ENCODE measurements at regions of chr14 and their contacts with region 1.

Region 1: DNA sequence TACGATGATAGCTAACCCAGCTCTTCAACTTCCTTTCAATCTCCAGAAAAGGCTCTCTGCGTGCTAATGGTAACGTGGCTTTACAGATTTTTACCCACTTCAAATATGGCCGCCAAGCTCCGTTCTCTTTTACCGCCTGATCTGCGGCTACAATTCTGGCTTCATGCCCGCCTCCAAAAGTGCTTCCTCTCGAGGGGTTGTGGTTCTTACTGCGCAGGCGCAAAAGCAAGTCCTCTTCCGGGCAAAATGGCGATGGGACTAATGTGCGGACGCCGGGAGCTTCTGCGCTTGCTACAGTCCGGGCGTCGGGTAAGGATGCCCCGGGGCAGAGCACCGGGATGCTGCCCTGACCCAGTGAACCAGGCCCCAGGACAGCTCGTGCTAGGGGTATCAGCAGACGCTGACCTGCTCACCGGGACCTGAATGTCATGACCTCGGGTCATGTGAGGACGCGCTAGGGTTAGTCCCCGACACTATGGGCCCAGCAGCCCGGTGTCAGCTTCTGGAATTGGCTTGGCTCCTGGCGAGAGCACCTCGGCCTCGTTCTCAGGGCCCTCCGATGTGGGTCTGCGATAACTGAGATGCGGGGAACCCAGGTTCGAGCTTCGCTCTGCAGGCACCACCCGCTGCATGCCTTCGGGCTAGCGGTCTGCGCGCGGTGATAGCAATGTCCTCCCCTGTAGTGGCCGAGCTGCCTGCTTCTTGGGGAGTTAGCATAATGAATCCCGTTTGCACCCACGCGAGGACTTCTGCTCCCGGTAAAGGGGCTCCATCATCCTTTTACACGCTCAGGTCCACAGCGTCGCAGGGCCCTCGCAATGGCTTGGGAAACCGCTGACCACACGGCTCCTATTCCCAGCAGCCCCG is at the start of gene OXA1L:
- DNase-seq: peak; percentile 99
- H3K4me3 Mint-ChIP-seq: peak within 1 kb of the TSS; percentile 83
- H3K27ac Mint-ChIP-seq: peak within 1 kb of the TSS; percentile 95
- H3K4me1 Mint-ChIP-seq: peaks cover 31% of the 10 kb centered on the region
- H3K27me3 Mint-ChIP-seq: no peaks in the 10 kb centered on the region
- total RNA-seq, gene OXA1L: 149 to 152 TPM

Region 2: GRCh38 chr14:22589096-22589839 is 177.4 kb before region 1 on chr14 and contains the start of gene DAD1:
- CTCF ChIA-PET with region 1: interaction called, 5 read pairs
- intact Hi-C with region 1: loop called (anchors 1 kb)
- DNase-seq: peak; percentile 100
- H3K4me3 Mint-ChIP-seq: peak within 1 kb of the TSS; percentile 98
- H3K27ac Mint-ChIP-seq: peak within 1 kb of the TSS; percentile 99
- H3K4me1 Mint-ChIP-seq: peaks cover 68% of the 10 kb centered on the region
- H3K27me3 Mint-ChIP-seq: no peaks in the 10 kb centered on the region
- total RNA-seq, gene DAD1: 219 to 226 TPM

Region 3: GRCh38 chr14:22713631-22713950 is 53.1 kb before region 1 on chr14:
- CTCF ChIA-PET with region 1: no interaction called
- intact Hi-C with region 1: loop called (anchors 2 kb)
- DNase-seq: no peak
- H3K4me3 Mint-ChIP-seq: peak overlapping the region; percentile 84
- H3K27ac Mint-ChIP-seq: peak overlapping the region; percentile 63
- H3K4me1 Mint-ChIP-seq: peaks cover 13% of the 10 kb centered on the region
- H3K27me3 Mint-ChIP-seq: peaks cover 11% of the 10 kb centered on the region

Region 4: GRCh38 chr14:22791301-22791700 is 24.6 kb after region 1 on chr14:
- CTCF ChIA-PET with region 1: no interaction called
- intact Hi-C with region 1: loop called (anchors 1 kb)
- DNase-seq: no peak
- H3K4me3 Mint-ChIP-seq: no peak overlapping the region
- H3K27ac Mint-ChIP-seq: peak overlapping the region; percentile 10
- H3K4me1 Mint-ChIP-seq: peaks cover 16% of the 10 kb centered on the region
- H3K27me3 Mint-ChIP-seq: no peaks in the 10 kb centered on the region

Region 5: GRCh38 chr14:22872033-22872832 is 105.5 kb after region 1 on chr14:
- CTCF ChIA-PET with region 1: no interaction called
- intact Hi-C with region 1: loop called (anchors 1 kb)
- DNase-seq: peak; percentile 87
- H3K4me3 Mint-ChIP-seq: peak overlapping the region; percentile 91
- H3K27ac Mint-ChIP-seq: peak overlapping the region; percentile 100
- H3K4me1 Mint-ChIP-seq: peaks cover 29% of the 10 kb centered on the region
- H3K27me3 Mint-ChIP-seq: no peaks in the 10 kb centered on the region

Region 6: GRCh38 chr14:23034483-23035302 is 268.0 kb after region 1 on chr14 and contains the start of gene PSMB5:
- CTCF ChIA-PET with region 1: no interaction called
- intact Hi-C with region 1: loop called (anchors 1 kb)
- DNase-seq: peak; percentile 96
- H3K4me3 Mint-ChIP-seq: peak within 1 kb of the TSS; percentile 88
- H3K27ac Mint-ChIP-seq: peak within 1 kb of the TSS; percentile 96
- H3K4me1 Mint-ChIP-seq: peaks cover 34% of the 10 kb centered on the region
- H3K27me3 Mint-ChIP-seq: no peaks in the 10 kb centered on the region
- total RNA-seq, gene PSMB5: 120 to 125 TPM

Measured in activated naive CD4-positive, alpha-beta T cell treated with anti-CD3 and anti-CD28 coated beads for 36 hours (primary cell).